ENCODE measurements at regions of chr10 and their contacts with region 1.

Region 1: GRCh38 chr10:5283305-5284158 is 81.2 kb upstream of the UCN3 start:
- DNase-seq: peak; percentile 59
- H3K4me3 Mint-ChIP-seq: peak overlapping the region; percentile 21
- H3K27ac Mint-ChIP-seq: peak overlapping the region; percentile 90
- H3K4me1 Mint-ChIP-seq: peaks cover 55% of the 10 kb centered on the region
- H3K27me3 Mint-ChIP-seq: no peaks in the 10 kb centered on the region

Region 2: DNA sequence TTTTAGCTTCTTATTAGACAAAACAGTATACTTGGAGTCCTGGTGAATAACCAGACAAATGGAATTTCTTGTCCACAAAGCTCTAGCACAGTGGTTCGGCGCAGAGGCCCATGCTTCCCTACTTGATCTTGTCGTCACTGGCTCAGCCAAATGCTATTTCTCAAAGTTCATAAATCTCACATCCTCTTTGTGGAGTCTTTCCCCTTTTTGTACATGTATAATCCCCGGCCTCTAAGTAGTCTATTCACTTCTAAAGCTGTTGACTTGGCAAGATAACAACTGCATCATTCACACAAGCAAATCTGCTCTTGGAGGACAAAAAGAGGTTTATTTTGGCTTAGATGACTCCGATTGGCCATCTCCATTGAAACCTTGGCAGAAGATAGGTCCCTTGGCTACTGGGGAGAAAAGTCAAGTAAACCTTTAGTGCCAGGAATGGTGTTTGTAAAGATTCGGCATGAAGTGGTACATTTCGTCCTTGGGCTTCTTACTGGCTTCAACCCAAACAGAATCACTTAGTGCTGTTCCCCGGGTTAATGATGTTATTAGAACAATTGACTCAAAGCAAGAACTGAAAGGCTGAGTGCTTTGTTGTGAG is 462.6 kb before region 1 on chr10:
- intact Hi-C with region 1: loop called (anchors 1 kb)
- DNase-seq: no peak
- H3K4me3 Mint-ChIP-seq: no peak overlapping the region
- H3K27ac Mint-ChIP-seq: no peak overlapping the region
- H3K4me1 Mint-ChIP-seq: peaks cover 3% of the 10 kb centered on the region
- H3K27me3 Mint-ChIP-seq: peaks cover 46% of the 10 kb centered on the region

Region 3: GRCh38 chr10:5094265-5095205 is 189.0 kb before region 1 on chr10 and contains the start of gene AKR1C3:
- intact Hi-C with region 1: loop called (anchors 1 kb)
- DNase-seq: no peak
- H3K4me3 Mint-ChIP-seq: peak within 1 kb of the TSS; percentile 59
- H3K27ac Mint-ChIP-seq: no peak within 1 kb of the TSS
- H3K4me1 Mint-ChIP-seq: peaks cover 14% of the 10 kb centered on the region
- H3K27me3 Mint-ChIP-seq: peaks cover 2% of the 10 kb centered on the region
- total RNA-seq, gene AKR1C3: 0.26 TPM in 1 of 2 replicates, not detected in the other

Region 4: DNA sequence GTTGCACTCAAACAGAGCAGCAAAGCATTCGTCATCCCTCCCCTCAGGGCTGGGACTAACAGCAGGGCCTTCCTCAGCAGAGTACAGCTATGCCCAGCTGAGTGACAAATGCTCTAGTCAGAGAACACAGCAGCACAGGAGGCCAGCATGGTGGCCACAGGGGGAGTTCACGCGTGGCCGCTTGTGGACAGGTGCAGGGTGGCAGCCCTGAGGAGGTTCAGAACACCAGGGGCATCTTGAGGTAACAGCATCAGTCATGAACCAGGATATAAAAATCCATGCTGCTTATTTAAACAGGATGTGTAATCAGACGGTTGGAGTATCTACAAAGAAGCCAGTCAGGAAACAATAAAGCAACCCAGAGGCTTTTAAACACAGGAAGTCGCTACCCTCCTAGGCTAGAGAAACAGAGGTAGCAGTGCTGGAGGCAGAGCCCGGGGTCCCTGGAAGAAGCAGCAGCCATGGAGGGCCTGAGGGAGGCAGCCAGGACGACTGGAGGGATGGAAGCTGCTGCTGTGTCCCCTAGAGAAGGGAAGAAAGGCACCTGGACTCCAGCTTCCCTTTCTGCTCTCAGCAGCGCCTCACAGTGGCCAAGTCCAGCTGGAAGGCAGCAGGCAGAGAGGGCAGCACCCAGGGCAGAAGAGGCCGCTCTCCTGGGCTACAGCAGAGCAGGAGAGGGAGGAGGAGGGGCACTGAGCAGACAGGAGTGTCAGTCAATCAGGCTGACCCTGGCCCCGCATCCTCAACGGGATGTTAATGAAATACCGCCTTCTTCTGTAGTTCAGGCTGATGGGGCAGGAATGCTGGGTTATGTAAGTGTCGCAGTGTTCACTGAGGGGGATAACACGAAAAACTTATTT is 10.4 kb after region 1 on chr10:
- intact Hi-C with region 1: loop called (anchors 1 kb)
- DNase-seq: peak; percentile 73
- H3K4me3 Mint-ChIP-seq: peak overlapping the region; percentile 93
- H3K27ac Mint-ChIP-seq: peak overlapping the region; percentile 100
- H3K4me1 Mint-ChIP-seq: peaks cover 82% of the 10 kb centered on the region
- H3K27me3 Mint-ChIP-seq: no peaks in the 10 kb centered on the region

Region 5: DNA sequence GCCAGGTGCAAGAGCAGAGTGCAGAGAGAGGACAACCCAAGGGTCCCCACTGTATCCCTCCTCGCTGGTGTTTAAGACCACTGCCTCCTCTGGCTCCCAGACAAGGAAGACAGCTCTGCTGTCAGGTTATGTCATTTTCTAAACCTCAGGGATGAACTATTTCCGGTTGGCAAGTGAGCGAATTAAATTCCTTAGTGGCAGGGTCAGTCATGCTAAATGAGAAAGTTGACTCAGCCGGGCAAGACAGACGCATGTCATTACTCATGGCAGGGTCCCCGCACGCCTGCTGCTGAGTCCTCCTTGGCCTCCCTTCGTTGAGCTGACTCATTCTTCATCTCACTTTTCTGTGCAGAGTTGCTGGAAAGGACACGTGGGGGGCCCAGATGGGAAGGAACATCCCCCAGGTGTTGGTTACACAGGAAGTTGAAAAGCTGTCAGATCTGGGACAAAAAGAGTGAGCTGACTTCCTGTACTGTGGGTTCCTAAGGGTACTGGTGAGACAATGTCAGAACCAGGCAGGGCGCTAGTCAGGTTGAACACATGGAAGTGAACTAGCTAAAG is 34.1 kb after region 1 on chr10:
- intact Hi-C with region 1: loop called (anchors 5 kb)
- DNase-seq: peak; percentile 60
- H3K4me3 Mint-ChIP-seq: peak overlapping the region; percentile 5
- H3K27ac Mint-ChIP-seq: peak overlapping the region; percentile 71
- H3K4me1 Mint-ChIP-seq: peaks cover 50% of the 10 kb centered on the region
- H3K27me3 Mint-ChIP-seq: no peaks in the 10 kb centered on the region

Region 6: DNA sequence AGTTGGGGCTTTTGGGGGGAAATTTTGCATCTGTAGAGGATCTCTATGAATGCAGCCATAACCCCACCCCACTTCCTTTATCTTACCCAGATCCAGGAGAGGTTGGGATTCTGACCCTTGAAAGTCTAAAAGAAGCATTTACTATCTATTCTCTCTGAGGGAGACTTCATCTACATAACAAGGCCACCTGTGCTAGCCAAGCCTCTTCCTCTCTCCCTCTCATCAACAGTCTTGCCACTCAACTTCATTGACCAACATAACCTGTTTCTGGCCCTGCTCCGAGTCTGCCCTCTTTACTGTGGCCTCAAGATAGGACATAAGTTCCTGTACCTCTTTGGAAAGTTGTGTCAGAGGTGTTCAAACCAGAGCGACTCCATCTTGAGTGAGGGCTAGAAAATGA is 101.7 kb after region 1 on chr10:
- intact Hi-C with region 1: loop called (anchors 5 kb)
- DNase-seq: no peak
- H3K4me3 Mint-ChIP-seq: no peak overlapping the region
- H3K27ac Mint-ChIP-seq: no peak overlapping the region
- H3K4me1 Mint-ChIP-seq: no peaks in the 10 kb centered on the region
- H3K27me3 Mint-ChIP-seq: peaks cover 4% of the 10 kb centered on the region

Region 7: DNA sequence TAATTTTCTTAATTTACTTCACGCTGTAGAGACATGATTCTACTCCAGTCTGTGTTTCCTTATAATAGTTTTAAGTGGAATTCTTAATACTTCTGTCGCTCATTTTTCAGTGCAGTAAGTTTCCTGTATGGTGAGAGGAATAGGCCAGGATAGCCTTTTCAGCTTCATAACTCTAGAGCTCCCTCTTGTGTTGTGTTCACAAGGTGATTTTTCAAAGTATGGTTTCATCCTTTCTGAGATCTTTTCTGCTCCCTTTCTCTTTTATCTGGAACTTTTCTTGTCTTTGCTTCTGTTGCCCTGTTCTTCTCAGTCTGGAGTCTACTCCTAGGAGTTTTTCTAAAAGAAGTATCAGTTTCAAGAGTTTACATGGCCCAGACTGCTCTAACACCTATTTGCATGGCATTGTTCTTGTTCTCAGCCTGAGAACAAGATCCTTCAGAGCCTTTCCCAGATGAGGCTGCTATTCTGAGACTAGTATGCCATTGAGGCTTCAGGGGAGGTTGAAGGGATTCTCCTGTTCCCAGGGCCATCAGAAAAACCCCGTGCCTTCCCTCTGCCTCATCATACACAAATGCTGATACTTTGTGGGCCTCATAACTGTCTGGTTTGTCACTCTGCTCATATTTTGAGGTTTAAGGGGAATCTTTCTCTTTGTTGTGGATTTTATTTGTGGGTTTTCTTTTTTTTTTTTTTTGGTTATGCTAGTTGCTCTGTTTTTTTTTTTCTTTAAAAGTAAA is 150.7 kb after region 1 on chr10:
- intact Hi-C with region 1: loop called (anchors 2 kb)
- DNase-seq: no peak
- H3K4me3 Mint-ChIP-seq: no peak overlapping the region
- H3K27ac Mint-ChIP-seq: peak overlapping the region; percentile 49
- H3K4me1 Mint-ChIP-seq: peaks cover 17% of the 10 kb centered on the region
- H3K27me3 Mint-ChIP-seq: no peaks in the 10 kb centered on the region

Measured in activated T-helper 1 cell treated with anti-CD3 and anti-CD28 coated beads, Interleukin-12 subunit alpha, Interleukin-12 subunit beta, Interleukin-2, Interleukin-4 antibody, amounts not matched to agents 30 ng/mL and 10 ng/mL and 1 ng/mL, durations not matched to agents 14 hours and 24 hours and 36 hours (primary cell).